Left cardiac atrium (tissue), 4 donors: ENCODE measurements at regions of chr1 and their contacts with region 1.

Region 1: DNA sequence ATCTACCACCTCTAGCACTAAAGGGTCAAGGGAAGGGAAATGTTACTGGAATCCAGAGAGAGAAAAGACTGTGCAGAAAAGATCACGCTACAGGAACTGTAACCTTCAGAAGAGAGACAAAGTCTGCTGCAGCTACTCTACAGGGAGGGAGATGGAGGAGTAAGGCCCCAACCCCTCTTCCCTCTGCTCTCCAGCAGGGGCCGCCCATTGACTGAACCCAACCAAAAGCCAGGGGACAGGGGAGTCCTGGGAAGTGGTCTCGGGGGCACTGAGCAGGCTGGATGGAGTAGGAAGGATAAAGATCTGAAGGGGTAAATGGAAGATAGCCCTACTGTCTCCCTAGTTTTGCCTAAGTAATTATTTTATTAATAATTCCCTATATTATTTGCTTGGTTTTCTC is 72.8 kb upstream of the NR5A2 start:
- DNase-seq: no peak
- ATAC-seq: no peak

Region 2: GRCh38 chr1:199909135-199909534 is 45.6 kb before region 1 on chr1:
- intact Hi-C with region 1: no loop called
- DNase-seq: no peak
- ATAC-seq: no peak

Region 3: GRCh38 chr1:200022239-200022804 is 67.6 kb after region 1 on chr1:
- intact Hi-C with region 1: no loop called
- DNase-seq: no peak
- ATAC-seq: no peak

Region 4: DNA sequence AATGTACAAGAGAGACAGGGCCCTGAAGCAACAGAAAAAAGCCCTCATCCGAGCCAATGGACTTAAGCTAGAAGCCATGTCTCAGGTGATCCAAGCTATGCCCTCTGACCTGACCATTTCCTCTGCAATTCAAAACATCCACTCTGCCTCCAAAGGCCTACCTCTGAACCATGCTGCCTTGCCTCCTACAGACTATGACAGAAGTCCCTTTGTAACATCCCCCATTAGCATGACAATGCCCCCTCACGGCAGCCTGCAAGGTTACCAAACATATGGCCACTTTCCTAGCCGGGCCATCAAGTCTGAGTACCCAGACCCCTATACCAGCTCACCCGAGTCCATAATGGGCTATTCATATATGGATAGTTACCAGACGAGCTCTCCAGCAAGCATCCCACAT is 93.5 kb after region 1 on chr1:
- intact Hi-C with region 1: no loop called
- DNase-seq: no peak
- ATAC-seq: no peak

Region 5: GRCh38 chr1:200302192-200302920 is 347.7 kb after region 1 on chr1:
- intact Hi-C with region 1: loop called in 1 of 2 experiments (anchors 10 kb)
- DNase-seq: peak; percentile 27
- ATAC-seq: peak; percentile 70 to 73